ENCODE measurements at regions of chr2 and their contacts with region 1.

Region 1: GRCh38 chr2:73156539-73157124 is 43.9 kb upstream of the RAB11FIP5 start:
- DNase-seq: no peak
- H3K4me3 ChIP-seq: peak overlapping the region; percentile 44
- H3K27ac ChIP-seq: no peak overlapping the region
- H3K27me3 ChIP-seq: peaks cover 11% of the 10 kb centered on the region
- CTCF ChIP-seq: peak; percentile 87

Region 2: DNA sequence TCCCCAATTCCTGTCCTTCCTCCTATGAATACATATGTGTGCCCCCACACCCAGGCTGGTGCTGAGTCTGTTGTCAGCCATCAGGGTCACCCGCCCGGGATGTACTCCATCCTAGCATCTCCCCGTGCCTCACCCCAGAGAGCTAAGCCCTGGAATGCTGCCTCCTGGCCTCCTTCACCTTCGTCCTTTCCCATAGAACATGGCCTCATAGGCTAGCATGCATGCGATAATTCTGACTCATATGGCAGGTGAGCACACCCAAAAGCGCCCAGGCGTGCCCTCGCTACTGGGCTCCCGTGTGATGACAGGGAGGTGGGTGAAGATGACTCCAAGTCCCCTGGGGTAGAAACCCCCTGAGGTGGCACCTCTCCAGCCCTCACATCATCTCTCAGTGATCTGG is 262.2 kb before region 1 on chr2:
- CTCF ChIA-PET with region 1: interaction called, 40 read pairs
- POLR2A ChIA-PET with region 1: interaction called, 10 read pairs
- DNase-seq: no peak
- H3K4me3 ChIP-seq: no peak overlapping the region
- H3K27ac ChIP-seq: no peak overlapping the region
- H3K27me3 ChIP-seq: peaks cover 9% of the 10 kb centered on the region
- CTCF ChIP-seq: no peak

Region 3: GRCh38 chr2:73112913-73113633 is 43.6 kb before region 1 on chr2 and contains the start of gene RAB11FIP5:
- CTCF ChIA-PET with region 1: interaction called, 11 read pairs
- POLR2A ChIA-PET with region 1: no interaction called
- DNase-seq: peak; percentile 55
- H3K4me3 ChIP-seq: peak within 1 kb of the TSS; percentile 84
- H3K27ac ChIP-seq: peak within 1 kb of the TSS; percentile 99
- H3K27me3 ChIP-seq: no peaks in the 10 kb centered on the region
- CTCF ChIP-seq: no peak
- polyA plus RNA-seq, gene RAB11FIP5: 29.6 and 37.5 TPM in 2 replicates

Region 4: DNA sequence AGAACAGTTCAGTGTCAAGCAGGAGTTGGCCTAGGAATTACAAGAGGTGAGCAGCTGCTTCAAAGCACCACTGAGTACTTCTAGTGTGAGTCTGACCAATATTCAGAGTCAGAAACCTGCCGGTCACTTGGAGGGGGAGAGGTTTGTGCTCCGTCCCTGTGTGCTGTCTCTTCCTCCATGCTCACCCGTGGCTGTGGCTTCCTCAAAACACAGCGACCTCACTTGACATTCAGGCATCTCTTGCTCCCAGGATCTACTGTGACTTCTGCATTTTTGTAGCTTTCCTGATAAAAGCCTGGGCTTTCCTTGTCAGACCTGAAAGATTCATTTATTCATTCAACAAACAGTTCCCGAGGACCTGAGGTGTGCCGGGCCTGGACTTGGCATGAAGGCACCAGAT is 547.7 kb after region 1 on chr2:
- CTCF ChIA-PET with region 1: no interaction called
- POLR2A ChIA-PET with region 1: no interaction called
- DNase-seq: no peak
- H3K4me3 ChIP-seq: no peak overlapping the region
- H3K27ac ChIP-seq: no peak overlapping the region
- H3K27me3 ChIP-seq: peaks cover 11% of the 10 kb centered on the region
- CTCF ChIP-seq: no peak

Measured in AG04450 (cell line).